ENCODE measurements at regions of chr14 and their contacts with region 1.

Region 1: DNA sequence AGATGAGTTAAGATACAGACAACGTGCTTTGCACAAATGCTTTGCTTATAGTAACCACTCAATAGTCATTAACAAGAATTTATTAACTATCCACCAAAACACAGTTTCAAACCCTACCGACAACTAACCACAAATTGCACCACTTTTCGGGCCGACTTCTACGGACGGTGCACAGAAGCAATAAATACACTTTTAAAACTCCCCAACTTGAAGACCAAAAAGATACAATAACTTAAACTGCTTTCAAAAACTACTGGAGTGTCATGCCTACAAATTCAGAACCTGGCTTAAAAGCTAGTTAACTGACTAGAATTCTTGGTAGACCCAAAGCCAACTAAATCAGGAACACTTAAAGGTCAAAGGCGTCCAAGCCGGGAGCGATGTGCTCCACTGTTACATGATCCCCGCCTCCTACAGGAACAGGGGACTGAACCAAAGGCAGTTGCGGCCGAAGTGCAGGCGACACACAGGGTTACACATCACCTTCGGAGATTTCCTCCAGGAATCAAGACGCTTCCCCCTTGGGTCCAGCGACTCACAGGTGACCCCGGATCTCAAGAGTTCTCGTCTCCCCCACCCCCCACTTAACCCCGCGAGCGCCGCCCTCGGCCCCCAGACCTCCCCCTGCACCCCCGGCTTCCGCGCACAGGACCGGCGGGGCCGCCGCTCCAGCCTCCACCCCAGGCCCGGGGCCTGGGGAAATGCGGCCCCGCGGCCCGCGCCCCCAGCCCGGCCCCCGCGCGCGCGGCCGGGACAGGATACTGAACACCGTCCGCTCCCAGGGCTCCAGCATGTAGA is 507 bp downstream of the SPTSSA start:
- DNase-seq: peak; percentile 3 to 32 (median 28)
- H3K4me3 ChIP-seq: peak overlapping the region; percentile 80 to 97 (median 84)
- H3K4me3 Mint-ChIP-seq: peak overlapping the region; percentile 91 to 93
- H3K27ac ChIP-seq: peak overlapping the region; percentile 58 to 85
- H3K27ac Mint-ChIP-seq: peak overlapping the region; percentile 86 to 96 (median 93)
- H3K4me1 ChIP-seq: peaks cover 37% of the 10 kb centered on the region in 2 donors
- H3K4me1 Mint-ChIP-seq: peaks cover 23% of the 10 kb centered on the region
- H3K27me3 ChIP-seq: no peaks in the 10 kb centered on the region
- H3K27me3 Mint-ChIP-seq: peaks cover 0 to 1% (median 0%) of the 10 kb centered on the region in 3 donors
- CTCF ChIP-seq: no peak

Region 2: DNA sequence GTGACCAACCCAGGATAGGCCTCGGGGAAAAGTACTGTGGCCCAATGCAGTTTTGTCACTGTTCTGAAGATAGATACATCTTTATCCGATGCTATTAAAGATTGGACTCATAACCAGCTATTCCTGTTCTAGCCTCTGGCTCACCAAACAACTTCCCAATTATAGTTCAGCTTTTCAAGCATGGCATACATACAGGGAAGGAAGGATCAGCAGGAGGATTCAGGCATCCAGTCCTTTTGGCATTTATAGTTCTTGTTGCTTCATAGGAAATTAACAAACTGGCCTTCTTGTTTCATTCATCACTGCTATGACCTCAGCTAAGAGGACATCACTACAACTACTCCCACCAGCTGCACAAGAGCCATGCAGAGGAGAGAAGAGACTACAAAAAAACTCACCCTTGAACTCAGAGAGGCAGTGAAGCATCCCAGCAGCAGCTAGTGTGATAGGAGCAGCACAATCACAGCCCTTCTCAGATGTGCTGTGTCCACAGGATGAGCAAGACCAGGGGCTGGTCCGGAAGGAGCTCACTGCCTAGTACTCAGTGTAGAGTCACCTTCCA is 100.0 kb before region 1 on chr14:
- intact Hi-C with region 1: loop called in 1 of 2 experiments (anchors 5 kb)
- DNase-seq: no peak
- H3K4me3 ChIP-seq: no peak overlapping the region
- H3K4me3 Mint-ChIP-seq: no peak overlapping the region
- H3K27ac ChIP-seq: peak overlapping the region in 1 of 2 donors; percentile 44
- H3K27ac Mint-ChIP-seq: peak overlapping the region in 4 of 7 donors; percentile 49 to 82 (median 64)
- H3K4me1 ChIP-seq: peaks cover 52 to 54% of the 10 kb centered on the region in 2 donors
- H3K4me1 Mint-ChIP-seq: peaks cover 53% of the 10 kb centered on the region
- H3K27me3 ChIP-seq: no peaks in the 10 kb centered on the region
- H3K27me3 Mint-ChIP-seq: no peaks in the 10 kb centered on the region
- CTCF ChIP-seq: no peak

Region 3: DNA sequence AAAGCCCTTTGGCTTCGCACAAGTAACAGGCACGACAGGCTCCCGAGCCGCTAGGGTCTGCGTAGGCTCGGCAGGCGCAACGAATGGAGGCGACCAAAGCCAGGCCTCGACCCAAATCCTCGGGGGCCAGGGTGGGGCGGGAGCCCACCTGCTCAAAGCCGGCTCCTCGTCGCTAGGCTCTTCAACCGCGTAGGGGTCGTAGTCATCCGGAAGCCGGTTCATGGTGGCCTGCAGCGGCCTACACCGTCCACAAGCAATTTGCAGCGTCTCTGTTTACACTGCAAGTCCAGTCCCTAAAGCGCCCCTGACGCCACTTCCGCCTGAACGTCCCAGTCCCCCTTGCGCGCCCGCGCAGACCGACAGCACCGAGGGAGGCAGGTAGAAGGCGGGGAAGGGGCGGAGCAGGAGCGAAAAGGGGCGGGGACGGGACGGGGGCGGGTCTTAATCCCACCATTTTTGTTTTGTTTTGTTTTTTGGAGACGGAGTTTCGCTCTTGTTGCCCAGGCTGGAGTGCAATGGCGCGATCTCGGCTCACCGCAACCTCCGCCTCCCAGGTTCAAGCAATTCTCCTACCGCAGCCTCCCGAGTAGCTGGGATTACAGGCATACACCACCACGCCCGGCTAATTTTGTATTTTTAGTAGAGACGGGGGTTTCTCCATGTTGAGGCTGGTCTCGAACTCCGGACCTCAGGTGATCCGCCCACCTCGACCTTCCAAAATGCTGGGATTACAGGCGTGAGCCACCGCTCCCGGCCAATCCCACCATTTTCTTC is 78.1 kb after region 1 on chr14 and contains the start of gene EAPP:
- intact Hi-C with region 1: loop called in 1 of 2 experiments (anchors 5 kb)
- DNase-seq: peak; percentile 97 to 98 (median 97)
- H3K4me3 ChIP-seq: peak within 1 kb of the TSS; percentile 87 to 99 (median 98)
- H3K4me3 Mint-ChIP-seq: peak within 1 kb of the TSS; percentile 95 to 99
- H3K27ac ChIP-seq: peak within 1 kb of the TSS; percentile 89 to 99
- H3K27ac Mint-ChIP-seq: peak within 1 kb of the TSS; percentile 96 to 99 (median 98)
- H3K4me1 ChIP-seq: peaks cover 10 to 18% of the 10 kb centered on the region in 2 donors
- H3K4me1 Mint-ChIP-seq: peaks cover 21% of the 10 kb centered on the region
- H3K27me3 ChIP-seq: no peaks in the 10 kb centered on the region
- H3K27me3 Mint-ChIP-seq: no peaks in the 10 kb centered on the region
- CTCF ChIP-seq: no peak
- polyA plus RNA-seq, gene EAPP: 20.7 to 76.2 (median 70.2) TPM

Region 4: GRCh38 chr14:34875031-34875922 is 413.7 kb after region 1 on chr14 and contains the start of gene BAZ1A:
- intact Hi-C with region 1: loop called in 1 of 2 experiments (anchors 10 kb)
- DNase-seq: peak; percentile 66 to 86 (median 85)
- H3K4me3 ChIP-seq: peak within 1 kb of the TSS; percentile 71 to 99 (median 82)
- H3K4me3 Mint-ChIP-seq: peak within 1 kb of the TSS; percentile 100
- H3K27ac ChIP-seq: peak within 1 kb of the TSS; percentile 94 to 99
- H3K27ac Mint-ChIP-seq: peak within 1 kb of the TSS; percentile 99 to 100 (median 99)
- H3K4me1 ChIP-seq: peaks cover 14 to 18% of the 10 kb centered on the region in 2 donors
- H3K4me1 Mint-ChIP-seq: peaks cover 29% of the 10 kb centered on the region
- H3K27me3 ChIP-seq: no peaks in the 10 kb centered on the region
- H3K27me3 Mint-ChIP-seq: no peaks in the 10 kb centered on the region
- CTCF ChIP-seq: no peak
- polyA plus RNA-seq, gene BAZ1A: 7.3 to 25.5 (median 12.7) TPM